ENCODE measurements at regions of chr7 and their contacts with region 1.

Region 1: DNA sequence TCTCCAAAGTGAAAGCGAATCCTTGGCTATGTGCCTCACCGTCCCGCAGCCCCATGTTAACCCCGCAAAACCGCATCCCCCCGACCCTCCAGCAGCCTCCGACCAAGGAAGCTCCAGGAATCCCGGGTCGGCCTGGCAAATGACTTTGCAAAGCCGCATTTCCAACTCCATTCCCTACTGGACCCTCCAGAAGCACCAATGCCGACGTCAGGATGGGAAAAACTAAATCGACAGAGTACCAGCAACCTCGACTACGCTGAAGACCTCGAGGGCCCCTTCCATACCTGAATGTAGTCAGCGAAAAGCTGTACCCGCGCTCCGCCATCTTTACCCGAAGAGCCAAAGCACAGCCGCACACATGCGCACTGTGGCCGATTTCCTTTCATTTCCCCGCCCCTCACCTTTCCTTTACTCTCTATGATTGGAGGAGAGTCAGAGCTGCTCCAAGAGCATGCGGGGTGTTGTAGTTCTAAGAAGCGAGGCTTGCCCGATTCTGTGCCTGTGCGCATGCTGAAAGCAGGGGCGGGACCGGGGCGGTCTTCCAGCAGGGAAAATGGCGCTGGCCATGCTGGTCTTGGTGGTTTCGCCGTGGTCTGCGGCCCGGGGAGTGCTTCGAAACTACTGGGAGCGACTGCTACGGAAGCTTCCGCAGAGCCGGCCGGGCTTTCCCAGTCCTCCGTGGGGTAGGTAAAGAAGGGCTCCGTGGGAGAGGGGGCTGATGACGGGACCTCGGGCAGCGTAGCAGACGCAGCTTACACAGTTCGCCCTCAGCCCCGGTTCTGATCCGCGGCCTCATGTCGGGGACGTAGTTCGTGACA is at the starts of genes MRPL32 and PSMA2:
- DNase-seq: peak; percentile 88
- ATAC-seq: peak; percentile 100
- H3K4me3 Mint-ChIP-seq: peak within 1 kb of the TSS; percentile 100
- H3K27ac Mint-ChIP-seq: peak within 1 kb of the TSS; percentile 97
- H3K4me1 Mint-ChIP-seq: peaks cover 57% of the 10 kb centered on the region
- H3K27me3 Mint-ChIP-seq: no peaks in the 10 kb centered on the region
- CTCF ChIP-seq: no peak
- total RNA-seq, gene MRPL32: 38.8 and 39.5 TPM in 2 replicates
- total RNA-seq, gene PSMA2: 88.1 and 109 TPM in 2 replicates

Region 2: GRCh38 chr7:42886129-42886528 is 45.9 kb before region 1 on chr7:
- CTCF ChIA-PET with region 1: interaction called, 3 read pairs
- POLR2A ChIA-PET with region 1: interaction called, 7 read pairs
- intact Hi-C with region 1: loop called (anchors 1 kb)
- DNase-seq: no peak
- ATAC-seq: no peak
- H3K4me3 Mint-ChIP-seq: no peak overlapping the region
- H3K27ac Mint-ChIP-seq: no peak overlapping the region
- H3K4me1 Mint-ChIP-seq: peaks cover 60% of the 10 kb centered on the region
- H3K27me3 Mint-ChIP-seq: no peaks in the 10 kb centered on the region
- CTCF ChIP-seq: no peak

Region 3: GRCh38 chr7:42911454-42912447 is 20.3 kb before region 1 on chr7 and contains the start of gene C7orf25:
- CTCF ChIA-PET with region 1: no interaction called
- POLR2A ChIA-PET with region 1: interaction called, 23 read pairs
- intact Hi-C with region 1: loop called (anchors 1 kb)
- DNase-seq: peak; percentile 96
- ATAC-seq: peak; percentile 94
- H3K4me3 Mint-ChIP-seq: peak within 1 kb of the TSS; percentile 91
- H3K27ac Mint-ChIP-seq: peak within 1 kb of the TSS; percentile 87
- H3K4me1 Mint-ChIP-seq: peaks cover 46% of the 10 kb centered on the region
- H3K27me3 Mint-ChIP-seq: no peaks in the 10 kb centered on the region
- CTCF ChIP-seq: no peak
- total RNA-seq, gene C7orf25: 4.5 and 5.5 TPM in 2 replicates

Region 4: DNA sequence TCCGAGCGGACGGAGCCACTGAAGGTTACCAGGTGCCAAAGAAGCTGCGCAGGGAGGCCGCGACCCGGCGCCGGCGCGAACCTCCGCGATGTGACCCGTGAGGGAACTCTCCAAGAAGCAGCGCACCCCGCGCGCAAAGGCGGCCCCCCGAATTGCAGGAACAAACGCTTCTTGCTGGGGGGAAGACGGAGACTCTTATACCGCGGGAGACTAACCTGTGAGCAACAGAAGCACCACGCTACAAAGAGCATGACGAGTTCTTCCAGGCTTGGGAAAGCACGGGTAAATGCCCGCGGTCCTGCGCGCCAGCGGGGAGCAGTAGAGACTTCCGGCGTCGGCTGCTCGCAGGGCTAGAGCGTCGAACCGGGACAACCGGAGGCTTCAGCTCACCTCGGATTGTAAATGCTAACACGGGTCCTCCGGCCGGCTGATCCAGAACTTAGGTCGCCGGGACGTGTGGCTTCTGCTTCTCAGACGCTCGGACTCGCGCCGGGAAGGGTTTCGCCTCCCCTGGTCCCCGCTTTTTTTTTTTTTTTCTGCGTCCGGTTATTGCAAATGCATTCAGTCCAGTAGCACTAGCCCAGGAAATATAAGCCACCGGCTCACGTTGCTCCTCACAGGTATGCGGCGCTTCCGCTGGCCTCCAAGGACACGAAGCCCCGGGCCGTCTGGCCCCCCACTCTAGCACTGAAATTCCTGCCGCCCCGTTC is 797.3 kb after region 1 on chr7 and contains the start of gene COA1:
- CTCF ChIA-PET with region 1: no interaction called
- POLR2A ChIA-PET with region 1: no interaction called
- intact Hi-C with region 1: loop called (anchors 2 kb)
- DNase-seq: peak; percentile 75
- ATAC-seq: peak; percentile 92
- H3K4me3 Mint-ChIP-seq: peak within 1 kb of the TSS; percentile 95
- H3K27ac Mint-ChIP-seq: peak within 1 kb of the TSS; percentile 88
- H3K4me1 Mint-ChIP-seq: peaks cover 40% of the 10 kb centered on the region
- H3K27me3 Mint-ChIP-seq: no peaks in the 10 kb centered on the region
- CTCF ChIP-seq: no peak
- total RNA-seq, gene COA1: 49.2 and 56.9 TPM in 2 replicates